MCF 10A (cell line): ENCODE measurements at regions of chr4 and their contacts with region 1.

Region 1: GRCh38 chr4:166594326-166594946 is 639.9 kb downstream of the SPOCK3 start:
- DNase-seq: peak; percentile 73
- H3K4me3 Mint-ChIP-seq: no peak overlapping the region
- H3K27ac Mint-ChIP-seq: no peak overlapping the region
- H3K4me1 Mint-ChIP-seq: no peaks in the 10 kb centered on the region
- H3K27me3 Mint-ChIP-seq: no peaks in the 10 kb centered on the region
- CTCF ChIP-seq: peak; percentile 78

Region 2: DNA sequence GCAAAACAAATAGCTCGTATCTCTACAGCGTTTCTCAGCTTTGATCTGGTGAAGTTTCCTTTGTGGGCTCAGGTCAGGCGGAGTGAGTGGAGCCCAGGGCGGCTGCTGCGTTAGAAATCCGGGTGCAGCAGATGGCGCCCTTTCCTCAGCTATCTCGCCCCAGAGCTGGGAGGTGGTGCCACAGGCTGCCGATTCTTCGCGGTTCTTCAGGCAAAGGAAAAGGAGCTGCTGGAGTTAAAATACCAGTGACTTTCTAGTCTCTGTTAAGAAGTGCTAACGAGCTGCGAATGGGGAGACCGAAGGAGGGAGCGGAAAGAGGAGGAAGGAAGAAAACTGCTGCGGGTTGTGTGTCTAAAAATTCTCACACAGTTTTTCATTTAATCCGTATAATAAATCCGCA is 1101.1 kb before region 1 on chr4:
- CTCF ChIA-PET with region 1: interaction called, 15 read pairs
- POLR2A ChIA-PET with region 1: no interaction called
- intact Hi-C with region 1: loop called (anchors 1 kb)
- DNase-seq: peak; percentile 74
- H3K4me3 Mint-ChIP-seq: no peak overlapping the region
- H3K27ac Mint-ChIP-seq: no peak overlapping the region
- H3K4me1 Mint-ChIP-seq: peaks cover 12% of the 10 kb centered on the region
- H3K27me3 Mint-ChIP-seq: no peaks in the 10 kb centered on the region
- CTCF ChIP-seq: peak; percentile 72

Region 3: GRCh38 chr4:166091912-166092510 is 502.4 kb before region 1 on chr4:
- CTCF ChIA-PET with region 1: interaction called, 5 read pairs
- POLR2A ChIA-PET with region 1: no interaction called
- intact Hi-C with region 1: loop called (anchors 5 kb)
- DNase-seq: peak; percentile 60
- H3K4me3 Mint-ChIP-seq: no peak overlapping the region
- H3K27ac Mint-ChIP-seq: no peak overlapping the region
- H3K4me1 Mint-ChIP-seq: no peaks in the 10 kb centered on the region
- H3K27me3 Mint-ChIP-seq: no peaks in the 10 kb centered on the region
- CTCF ChIP-seq: peak; percentile 63

Region 4: DNA sequence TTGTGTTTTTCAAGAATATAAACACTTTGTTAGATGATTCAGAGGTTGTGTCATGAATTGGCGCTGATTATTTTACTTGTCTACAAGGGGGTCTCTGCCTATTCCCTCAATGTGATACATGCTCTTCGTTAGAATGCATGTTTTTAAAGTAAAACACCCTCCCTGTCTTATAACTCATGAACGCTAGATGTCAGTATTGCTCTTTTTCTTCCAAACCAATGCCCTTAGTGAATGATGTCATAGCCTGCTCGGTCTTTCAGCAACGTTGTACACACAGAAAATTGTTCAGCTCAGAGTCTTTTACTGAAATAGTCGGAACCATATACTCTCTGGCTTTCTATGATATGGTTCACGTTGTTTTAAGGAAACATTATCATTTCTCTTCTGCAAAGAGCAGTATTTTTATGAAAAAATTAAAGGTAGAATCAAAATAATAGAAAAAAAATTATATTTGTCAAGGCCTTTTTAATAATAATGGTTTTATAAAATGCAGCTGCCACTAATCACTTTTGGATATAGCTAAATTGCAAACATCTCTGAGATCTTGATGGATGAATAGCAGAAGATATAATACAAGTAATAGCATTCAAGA is 428.5 kb before region 1 on chr4:
- CTCF ChIA-PET with region 1: interaction called, 133 read pairs
- POLR2A ChIA-PET with region 1: interaction called, 9 read pairs
- intact Hi-C with region 1: loop called (anchors 1 kb)
- DNase-seq: peak; percentile 84
- H3K4me3 Mint-ChIP-seq: no peak overlapping the region
- H3K27ac Mint-ChIP-seq: no peak overlapping the region
- H3K4me1 Mint-ChIP-seq: peaks cover 6% of the 10 kb centered on the region
- H3K27me3 Mint-ChIP-seq: no peaks in the 10 kb centered on the region
- CTCF ChIP-seq: peak; percentile 79

Region 5: DNA sequence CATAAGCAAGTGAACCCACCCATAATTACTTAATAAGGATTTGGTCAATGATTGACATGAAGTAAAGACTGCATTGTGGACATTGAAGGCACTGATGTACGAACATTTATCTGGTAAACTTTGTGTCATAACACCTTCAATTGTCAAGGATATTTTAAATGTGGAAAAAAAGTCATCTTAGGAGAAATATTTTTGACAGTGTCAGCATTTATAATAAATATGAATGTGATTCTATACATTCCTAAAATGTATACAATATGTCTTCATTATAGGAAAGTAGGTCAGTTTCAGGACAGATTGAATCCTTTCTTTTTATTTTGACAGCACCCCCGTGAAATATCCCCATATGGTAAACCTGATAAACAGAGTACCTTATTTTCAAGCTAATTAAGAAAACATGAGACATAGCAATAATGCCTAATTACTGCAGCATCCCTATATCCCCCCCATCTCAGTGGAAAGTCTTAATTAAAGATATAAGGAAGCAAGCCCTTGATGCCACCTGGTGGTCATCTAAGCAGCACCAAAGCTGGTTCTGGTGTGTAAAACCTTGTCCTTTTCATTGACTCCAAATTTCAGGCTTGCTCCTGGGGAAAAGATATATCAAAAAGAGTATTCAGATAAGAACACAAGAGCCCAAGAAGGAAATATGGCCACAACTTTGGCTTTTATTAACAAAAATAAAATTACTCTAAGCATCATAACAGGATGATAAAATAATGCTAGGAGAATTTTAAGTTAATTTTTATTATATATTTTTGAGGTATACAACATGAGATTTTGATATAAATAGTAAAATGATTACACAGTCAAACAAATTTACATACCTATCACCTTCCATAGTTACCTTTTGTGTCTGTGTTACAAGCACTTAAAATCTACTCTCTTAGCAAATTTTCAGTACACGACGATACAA is 341.7 kb before region 1 on chr4:
- CTCF ChIA-PET with region 1: interaction called, 5 read pairs
- POLR2A ChIA-PET with region 1: no interaction called
- intact Hi-C with region 1: loop called (anchors 5 kb)
- DNase-seq: peak; percentile 47
- H3K4me3 Mint-ChIP-seq: no peak overlapping the region
- H3K27ac Mint-ChIP-seq: no peak overlapping the region
- H3K4me1 Mint-ChIP-seq: no peaks in the 10 kb centered on the region
- H3K27me3 Mint-ChIP-seq: no peaks in the 10 kb centered on the region
- CTCF ChIP-seq: peak; percentile 45

Region 6: DNA sequence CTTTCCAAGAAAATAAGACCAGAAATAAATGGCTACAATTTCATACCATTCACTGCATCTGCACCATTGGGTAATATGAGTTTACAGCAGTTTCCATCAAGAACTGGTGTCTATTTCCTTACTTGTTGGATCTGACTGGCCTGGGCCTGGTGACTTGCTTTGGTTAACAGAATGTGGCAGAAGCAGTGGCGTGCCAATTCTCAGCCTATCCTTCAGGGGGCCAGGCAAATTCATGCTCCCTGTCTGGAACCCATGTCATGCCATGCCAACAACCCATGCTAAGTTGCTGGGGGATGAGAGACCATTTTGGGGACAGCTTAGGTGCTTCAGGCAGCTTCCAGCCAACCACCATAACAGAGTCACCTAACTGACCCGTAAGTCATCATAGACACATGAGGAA is 16.8 kb before region 1 on chr4:
- CTCF ChIA-PET with region 1: interaction called, 23 read pairs
- POLR2A ChIA-PET with region 1: no interaction called
- intact Hi-C with region 1: no loop called
- DNase-seq: no peak
- H3K4me3 Mint-ChIP-seq: no peak overlapping the region
- H3K27ac Mint-ChIP-seq: no peak overlapping the region
- H3K4me1 Mint-ChIP-seq: no peaks in the 10 kb centered on the region
- H3K27me3 Mint-ChIP-seq: no peaks in the 10 kb centered on the region
- CTCF ChIP-seq: no peak

Region 7: GRCh38 chr4:167014944-167015343 is 420.5 kb after region 1 on chr4:
- CTCF ChIA-PET with region 1: interaction called, 5 read pairs
- POLR2A ChIA-PET with region 1: no interaction called
- intact Hi-C with region 1: loop called (anchors 5 kb)
- DNase-seq: no peak
- H3K4me3 Mint-ChIP-seq: no peak overlapping the region
- H3K27ac Mint-ChIP-seq: no peak overlapping the region
- H3K4me1 Mint-ChIP-seq: no peaks in the 10 kb centered on the region
- H3K27me3 Mint-ChIP-seq: no peaks in the 10 kb centered on the region
- CTCF ChIP-seq: no peak